H1 (cell line): ENCODE measurements at regions of chr16 and their contacts with region 1.

Region 1: DNA sequence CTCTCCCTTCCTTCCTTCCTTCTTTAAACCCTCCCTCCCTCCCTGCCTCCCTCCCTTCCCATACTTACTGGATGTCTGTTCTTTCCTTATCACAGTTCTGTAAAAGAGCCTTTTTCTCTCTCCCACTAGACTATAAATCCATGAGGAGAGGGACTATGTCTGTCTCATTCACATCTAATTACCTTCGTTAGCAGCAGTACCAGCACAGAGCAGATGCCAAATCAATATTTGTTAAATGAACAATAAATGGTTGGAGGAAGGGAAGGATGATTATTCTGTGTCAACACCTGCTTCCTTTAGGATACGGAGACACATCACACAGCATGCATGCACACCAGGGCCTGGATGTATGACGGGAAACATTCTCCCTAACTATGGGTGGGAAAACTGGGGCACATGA is 94.2 kb downstream of the DNAH3 start:
- DNase-seq: no peak
- H3K4me3 ChIP-seq: no peak overlapping the region
- H3K27ac ChIP-seq: no peak overlapping the region
- H3K4me1 ChIP-seq: no peaks in the 10 kb centered on the region
- H3K27me3 ChIP-seq: no peaks in the 10 kb centered on the region
- CTCF ChIP-seq: no peak
- EP300 ChIP-seq: no peak
- POLR2A ChIP-seq: no peak
- RAD21 ChIP-seq: no peak

Region 2: DNA sequence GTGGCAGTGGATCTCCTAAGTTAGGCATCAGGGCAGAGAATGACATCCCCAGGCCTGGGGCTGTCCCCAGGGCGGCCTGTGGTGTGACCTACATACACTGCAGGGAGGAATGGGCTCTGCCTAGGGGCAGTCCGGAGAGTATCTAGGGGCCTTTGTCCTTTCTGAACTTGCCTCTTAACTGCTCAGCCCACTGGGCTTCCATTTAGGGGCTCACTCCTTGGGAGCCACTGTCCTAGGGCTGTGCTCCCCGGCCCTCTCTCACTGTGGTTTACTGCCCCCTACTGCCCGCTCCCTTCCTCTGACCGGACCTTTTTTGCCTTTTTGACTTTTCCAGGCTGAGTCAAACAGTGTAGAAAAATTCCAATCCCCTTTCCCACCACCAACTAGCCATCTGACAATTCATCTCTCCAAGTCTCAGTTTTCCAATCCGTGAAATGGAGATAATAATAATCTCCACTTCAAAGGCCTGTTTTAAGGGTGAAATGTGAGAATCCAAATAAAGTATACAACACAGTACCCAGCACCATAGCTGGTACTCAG is 27.4 kb after region 1 on chr16:
- CTCF ChIA-PET with region 1: interaction called, 10 read pairs
- POLR2A ChIA-PET with region 1: no interaction called
- DNase-seq: peak; percentile 47 to 90
- H3K4me3 ChIP-seq: no peak overlapping the region
- H3K27ac ChIP-seq: no peak overlapping the region
- H3K4me1 ChIP-seq: no peaks in the 10 kb centered on the region
- H3K27me3 ChIP-seq: no peaks in the 10 kb centered on the region
- CTCF ChIP-seq: peak; percentile 76 to 83 (median 83)
- EP300 ChIP-seq: 0 out of 3 replicates have a peak, but pooled peaks of 1 of the 2 experiments have one; percentile 5
- POLR2A ChIP-seq: no peak
- RAD21 ChIP-seq: peak; percentile 95 to 96